ENCODE measurements at regions of chr7 and their contacts with region 1.

Region 1: DNA sequence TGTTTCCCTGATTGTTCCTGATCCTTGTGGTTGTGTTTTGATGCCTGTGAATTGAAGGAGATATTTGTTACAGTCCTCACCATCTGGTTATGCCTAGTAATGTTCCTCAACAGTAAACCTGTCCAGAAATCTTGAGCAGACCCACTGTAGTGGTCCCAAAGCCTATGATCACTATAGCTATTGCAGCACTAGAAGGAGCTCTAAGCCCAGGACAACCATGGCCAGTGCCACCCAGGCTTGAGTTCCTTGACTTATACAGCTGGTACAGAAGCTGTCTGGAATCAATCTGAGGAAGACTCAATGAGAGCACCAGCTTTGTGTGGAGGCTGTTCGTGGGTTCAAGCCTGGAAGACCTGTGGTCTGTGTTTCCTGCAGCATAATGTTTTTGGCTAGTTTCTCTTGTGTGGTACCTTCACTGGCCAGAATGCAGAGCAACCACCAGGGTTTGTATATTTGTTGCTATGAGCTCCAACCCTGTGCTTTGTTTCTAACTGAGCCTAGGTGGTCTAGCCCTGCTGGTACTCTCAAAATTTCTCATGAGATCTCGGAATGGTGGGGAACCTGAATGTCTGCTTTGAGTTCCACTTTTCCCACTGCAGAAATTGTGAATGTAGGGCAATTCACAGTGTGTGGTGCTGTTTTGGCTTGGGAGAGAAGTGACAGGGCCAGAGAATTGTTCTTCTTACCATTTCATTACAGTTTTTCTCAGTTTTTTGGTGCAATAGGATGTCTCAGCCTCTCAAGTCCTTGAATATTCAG is 355.2 kb downstream of the SUGCT start:
- DNase-seq: no peak
- H3K4me3 ChIP-seq: no peak overlapping the region
- H3K27ac ChIP-seq: no peak overlapping the region
- H3K4me1 ChIP-seq: no peaks in the 10 kb centered on the region
- H3K27me3 ChIP-seq: no peaks in the 10 kb centered on the region
- CTCF ChIP-seq: no peak

Region 2: DNA sequence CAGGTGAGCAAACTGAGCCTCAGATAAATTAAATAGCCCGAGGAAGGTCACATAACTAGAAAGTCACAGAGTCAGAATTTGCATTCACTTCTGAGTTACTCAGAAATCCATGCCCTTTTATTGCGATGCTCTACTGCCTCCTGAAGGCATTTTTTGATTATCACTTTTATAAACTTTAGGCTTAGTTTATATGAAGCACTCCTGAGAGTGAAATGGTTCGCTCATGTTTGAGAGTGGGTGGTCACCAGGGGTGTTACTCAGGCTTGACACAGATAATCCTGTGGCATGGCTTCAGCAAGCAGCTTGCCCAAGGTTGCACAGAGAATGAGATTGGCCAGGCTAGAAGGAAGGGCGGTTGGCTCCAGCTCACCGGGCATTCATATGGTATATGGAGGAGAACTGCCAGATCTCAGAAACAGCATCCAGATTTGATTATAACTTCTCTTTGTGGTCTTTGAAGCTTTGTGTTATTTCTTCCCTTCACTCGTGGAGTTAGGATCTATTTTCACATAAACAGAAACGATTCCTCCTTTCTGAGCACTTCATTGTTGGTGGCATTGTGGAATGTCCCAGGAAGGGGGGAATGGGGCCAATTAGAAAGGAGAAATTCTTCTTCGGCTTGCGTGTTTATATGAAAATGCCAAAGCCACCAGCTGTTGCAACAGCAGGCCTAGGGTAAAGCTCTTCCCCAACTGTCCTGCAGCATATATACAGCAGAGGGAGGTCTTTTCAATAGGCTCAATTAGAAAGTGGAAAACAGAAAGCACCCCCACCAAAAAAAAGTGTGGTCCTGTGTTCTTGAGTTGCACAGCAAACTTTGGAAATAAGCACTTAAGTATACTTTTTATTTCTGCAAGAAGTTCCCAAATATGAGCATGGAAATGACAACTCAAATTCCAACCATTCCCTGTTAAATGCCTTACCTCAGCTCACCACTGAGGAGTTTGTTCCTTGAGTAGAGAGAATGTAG is 273.6 kb after region 1 on chr7:
- CTCF ChIA-PET with region 1: no interaction called
- POLR2A ChIA-PET with region 1: no interaction called
- intact Hi-C with region 1: loop called (anchors 10 kb)
- DNase-seq: peak; percentile 11
- H3K4me3 ChIP-seq: no peak overlapping the region
- H3K27ac ChIP-seq: no peak overlapping the region
- H3K4me1 ChIP-seq: no peaks in the 10 kb centered on the region
- H3K27me3 ChIP-seq: no peaks in the 10 kb centered on the region
- CTCF ChIP-seq: 0 out of 2 replicates have a peak, but pooled peaks have one; percentile 11

Measured in A673 (cell line).